SK-N-SH (cell line): ENCODE measurements at regions of chr14 and their contacts with region 1.

Region 1: GRCh38 chr14:64986578-64987571 is at the start of gene FNTB:
- DNase-seq: peak; percentile 92
- H3K4me3 ChIP-seq: peak within 1 kb of the TSS; percentile 78 to 93
- H3K27ac ChIP-seq: peak within 1 kb of the TSS; percentile 67 to 93
- H3K4me1 ChIP-seq: peaks cover 6 to 8% of the 10 kb centered on the region in 2 experiments; a peak in 3 of 4 replicates
- H3K27me3 ChIP-seq: no peaks in the 10 kb centered on the region
- CTCF ChIP-seq: peak; percentile 82
- EP300 ChIP-seq: no peak
- RAD21 ChIP-seq: peak; percentile 86
- polyA plus RNA-seq, gene FNTB: 18.4 and 19.8 TPM in 2 replicates

Region 2: GRCh38 chr14:64400829-64401459 is 585.9 kb before region 1 on chr14:
- CTCF ChIA-PET with region 1: no interaction called
- POLR2A ChIA-PET with region 1: no interaction called
- DNase-seq: no peak
- H3K4me3 ChIP-seq: no peak overlapping the region
- H3K27ac ChIP-seq: no peak overlapping the region
- H3K4me1 ChIP-seq: no peaks in the 10 kb centered on the region
- H3K27me3 ChIP-seq: no peaks in the 10 kb centered on the region
- CTCF ChIP-seq: no peak
- EP300 ChIP-seq: no peak
- RAD21 ChIP-seq: no peak

Region 3: DNA sequence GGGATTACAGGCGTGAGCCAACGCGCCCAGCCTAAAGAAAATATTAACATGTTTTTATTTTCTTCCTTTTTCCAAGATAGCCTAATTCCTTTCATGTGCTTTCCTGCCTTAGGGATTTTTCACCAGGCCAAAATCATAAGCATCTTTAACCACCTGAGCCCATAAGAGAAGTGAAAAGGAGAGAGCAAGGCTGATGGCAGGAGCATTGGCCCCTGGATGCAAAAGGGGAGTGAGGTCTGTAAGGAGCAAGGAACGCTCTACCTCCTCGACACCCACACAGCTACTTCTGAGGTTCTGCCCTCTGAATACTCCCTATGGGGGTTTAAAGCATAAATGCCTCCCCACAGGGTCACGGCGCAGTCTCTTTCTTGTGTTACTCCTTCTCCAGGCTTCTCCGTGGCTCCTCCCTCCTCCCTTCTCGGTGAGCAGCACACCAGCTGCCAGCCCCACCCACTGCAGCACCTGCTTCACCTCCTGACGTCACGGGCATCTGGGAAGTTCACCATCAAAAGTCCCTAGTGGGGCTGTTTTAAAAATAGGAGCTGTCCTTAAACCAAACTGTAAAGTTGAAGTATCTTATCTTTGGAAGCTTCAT is 174.6 kb before region 1 on chr14:
- CTCF ChIA-PET with region 1: no interaction called
- POLR2A ChIA-PET with region 1: no interaction called
- DNase-seq: no peak
- H3K4me3 ChIP-seq: no peak overlapping the region
- H3K27ac ChIP-seq: no peak overlapping the region
- H3K4me1 ChIP-seq: peaks cover 4 to 6% of the 10 kb centered on the region in 2 experiments; a peak in 3 of 4 replicates
- H3K27me3 ChIP-seq: no peaks in the 10 kb centered on the region
- CTCF ChIP-seq: no peak
- EP300 ChIP-seq: no peak
- RAD21 ChIP-seq: no peak

Region 4: DNA sequence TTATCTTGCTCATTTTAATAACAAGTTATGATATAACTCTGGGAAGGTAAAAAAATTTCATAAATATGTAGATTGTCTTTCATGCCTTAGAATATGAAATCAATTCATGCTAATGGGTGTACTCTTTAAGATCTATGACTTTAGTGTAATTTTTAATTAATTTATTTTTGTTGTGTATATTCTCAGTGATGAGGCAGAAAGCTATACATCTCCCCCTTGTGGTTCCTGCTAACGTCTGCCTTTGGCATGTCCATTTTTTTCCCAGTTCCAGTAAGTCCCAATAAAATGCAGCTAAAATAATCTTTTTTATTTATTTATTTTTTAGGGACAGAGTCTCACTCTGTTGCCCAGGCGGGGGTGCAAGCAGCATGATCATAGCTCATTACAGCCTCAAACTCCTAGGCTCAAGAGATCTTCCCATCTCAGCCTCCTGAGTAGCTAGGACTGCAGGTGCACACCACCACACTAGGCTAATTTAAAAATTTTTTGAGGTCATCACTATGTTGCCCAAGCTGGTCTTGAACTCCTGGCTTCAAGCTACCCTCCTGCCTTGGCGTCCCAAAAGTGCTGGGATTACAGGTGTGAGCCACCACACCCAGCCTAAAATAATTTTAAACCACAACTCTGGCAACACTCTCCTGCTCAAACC is 75.9 kb before region 1 on chr14:
- CTCF ChIA-PET with region 1: interaction called, 11 read pairs
- POLR2A ChIA-PET with region 1: no interaction called
- DNase-seq: peak; percentile 35
- H3K4me3 ChIP-seq: no peak overlapping the region
- H3K27ac ChIP-seq: no peak overlapping the region
- H3K4me1 ChIP-seq: peaks cover 0 to 9% of the 10 kb centered on the region in 2 experiments; a peak in 2 of 4 replicates
- H3K27me3 ChIP-seq: no peaks in the 10 kb centered on the region
- CTCF ChIP-seq: peak; percentile 87
- EP300 ChIP-seq: no peak
- RAD21 ChIP-seq: peak; percentile 67

Region 5: DNA sequence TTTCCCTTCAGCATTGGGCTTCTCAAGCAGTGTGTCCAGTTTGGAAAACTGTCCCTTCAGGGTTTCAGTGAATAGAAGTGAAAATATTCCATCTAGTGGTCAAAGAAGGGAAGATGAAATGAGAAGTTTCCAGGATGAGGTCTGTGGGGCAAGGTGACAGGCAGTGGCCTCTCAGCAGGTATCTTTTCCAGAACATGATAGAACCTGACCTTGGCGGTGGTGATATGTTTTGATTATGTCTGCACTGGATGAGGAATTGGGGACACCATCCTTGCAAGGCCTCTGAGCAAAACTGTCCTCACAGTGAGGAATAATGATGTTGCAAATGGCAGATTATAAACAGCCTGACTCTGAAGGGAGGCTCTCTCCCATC is 49.1 kb before region 1 on chr14:
- CTCF ChIA-PET with region 1: no interaction called
- POLR2A ChIA-PET with region 1: no interaction called
- DNase-seq: no peak
- H3K4me3 ChIP-seq: no peak overlapping the region
- H3K27ac ChIP-seq: no peak overlapping the region
- H3K4me1 ChIP-seq: no peaks in the 10 kb centered on the region; a peak in 2 of 4 replicates
- H3K27me3 ChIP-seq: no peaks in the 10 kb centered on the region
- CTCF ChIP-seq: peak; percentile 45
- EP300 ChIP-seq: no peak
- RAD21 ChIP-seq: peak; percentile 55

Region 6: GRCh38 chr14:64960762-64961278 is 26.1 kb before region 1 on chr14:
- CTCF ChIA-PET with region 1: interaction called, 14 read pairs
- POLR2A ChIA-PET with region 1: no interaction called
- DNase-seq: peak; percentile 47
- H3K4me3 ChIP-seq: no peak overlapping the region
- H3K27ac ChIP-seq: no peak overlapping the region
- H3K4me1 ChIP-seq: peaks cover 0 to 18% of the 10 kb centered on the region in 2 experiments; a peak in 1 of 4 replicates
- H3K27me3 ChIP-seq: no peaks in the 10 kb centered on the region
- CTCF ChIP-seq: no peak; the same call in 1 of the 2 replicates
- EP300 ChIP-seq: no peak; a peak in 1 of 4 replicates
- RAD21 ChIP-seq: no peak

Region 7: GRCh38 chr14:64971943-64972791 is 14.7 kb before region 1 on chr14 and contains the start of gene RAB15:
- CTCF ChIA-PET with region 1: interaction called, 10 read pairs
- POLR2A ChIA-PET with region 1: no interaction called
- DNase-seq: peak; percentile 90
- H3K4me3 ChIP-seq: peak within 1 kb of the TSS; percentile 59 to 69
- H3K27ac ChIP-seq: peak within 1 kb of the TSS in 1 of 2 experiments; percentile 35; a peak in 1 of 4 replicates
- H3K4me1 ChIP-seq: peaks cover 10 to 19% of the 10 kb centered on the region in 2 experiments; a peak in 3 of 4 replicates
- H3K27me3 ChIP-seq: no peaks in the 10 kb centered on the region
- CTCF ChIP-seq: no peak
- EP300 ChIP-seq: no peak
- RAD21 ChIP-seq: no peak
- polyA plus RNA-seq, gene RAB15: 14.2 and 14.8 TPM in 2 replicates

Region 8: GRCh38 chr14:64997108-64997794 is 10.4 kb after region 1 on chr14:
- CTCF ChIA-PET with region 1: interaction called, 23 read pairs
- POLR2A ChIA-PET with region 1: interaction called, 3 read pairs
- DNase-seq: no peak
- H3K4me3 ChIP-seq: no peak overlapping the region
- H3K27ac ChIP-seq: no peak overlapping the region
- H3K4me1 ChIP-seq: no peaks in the 10 kb centered on the region; a peak in 1 of 4 replicates
- H3K27me3 ChIP-seq: no peaks in the 10 kb centered on the region
- CTCF ChIP-seq: no peak
- EP300 ChIP-seq: no peak
- RAD21 ChIP-seq: no peak

Region 9: GRCh38 chr14:65019944-65020566 is 33.2 kb after region 1 on chr14:
- CTCF ChIA-PET with region 1: interaction called, 50 read pairs
- POLR2A ChIA-PET with region 1: no interaction called
- DNase-seq: peak; percentile 59
- H3K4me3 ChIP-seq: no peak overlapping the region
- H3K27ac ChIP-seq: no peak overlapping the region
- H3K4me1 ChIP-seq: no peaks in the 10 kb centered on the region
- H3K27me3 ChIP-seq: no peaks in the 10 kb centered on the region
- CTCF ChIP-seq: peak; percentile 73
- EP300 ChIP-seq: no peak
- RAD21 ChIP-seq: peak; percentile 57